GM23248 (cell line): ENCODE measurements at regions of chr11 and their contacts with region 1.

Region 1: GRCh38 chr11:6674862-6675261 is 8.3 kb downstream of the MRPL17 start:
- DNase-seq: no peak
- H3K4me3 ChIP-seq: no peak overlapping the region
- H3K27ac ChIP-seq: no peak overlapping the region
- H3K4me1 ChIP-seq: no peaks in the 10 kb centered on the region
- H3K27me3 ChIP-seq: no peaks in the 10 kb centered on the region

Region 2: GRCh38 chr11:6531267-6531752 is 143.6 kb before region 1 on chr11:
- in situ Hi-C with region 1: loop called (anchors 10 kb)
- DNase-seq: peak; percentile 68
- H3K4me3 ChIP-seq: no peak overlapping the region
- H3K27ac ChIP-seq: no peak overlapping the region
- H3K4me1 ChIP-seq: no peaks in the 10 kb centered on the region
- H3K27me3 ChIP-seq: no peaks in the 10 kb centered on the region

Region 3: DNA sequence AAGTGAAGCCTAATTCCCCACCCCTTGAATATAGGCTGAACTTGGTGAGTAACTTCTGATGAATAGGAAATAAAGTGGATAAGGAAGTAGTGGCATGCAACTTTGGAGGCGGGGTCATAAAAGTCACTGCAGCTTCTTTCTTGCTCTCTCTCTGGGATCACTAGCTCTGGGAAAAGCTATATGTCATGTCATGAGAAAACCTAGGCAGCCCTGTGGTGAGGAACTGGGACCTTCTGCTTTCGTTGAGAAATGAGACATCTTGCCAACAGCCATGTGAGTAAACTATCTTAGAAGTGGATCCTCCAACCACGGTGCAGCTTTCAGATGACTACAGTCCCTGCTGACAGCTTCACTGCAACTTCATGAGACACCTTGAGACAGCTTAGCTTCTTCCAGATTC is 329.6 kb after region 1 on chr11:
- in situ Hi-C with region 1: no loop called
- DNase-seq: peak; percentile 97
- H3K4me3 ChIP-seq: peak overlapping the region; percentile 49
- H3K27ac ChIP-seq: peak overlapping the region; percentile 70
- H3K4me1 ChIP-seq: peaks cover 17% of the 10 kb centered on the region
- H3K27me3 ChIP-seq: no peaks in the 10 kb centered on the region